ENCODE measurements at regions of chr1 and their contacts with region 1.

Region 1: DNA sequence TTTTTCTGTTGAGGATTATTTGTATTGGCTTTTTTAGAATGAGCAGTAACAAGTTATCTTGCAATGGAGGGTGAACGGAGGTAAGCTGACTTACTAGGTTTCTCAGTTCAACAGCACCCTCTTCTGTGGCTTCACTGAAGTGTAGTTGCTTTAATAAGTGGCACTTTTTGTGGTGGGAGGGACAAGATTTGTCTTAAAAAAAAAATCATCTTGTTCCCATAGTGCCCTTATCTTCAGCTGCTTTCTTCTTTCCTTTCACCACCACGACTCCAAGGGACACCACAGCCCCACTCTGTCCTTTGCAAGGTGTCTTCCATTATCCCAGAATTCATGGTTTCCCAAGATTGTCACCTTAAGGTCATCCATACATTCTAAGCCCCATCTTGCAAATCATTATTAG is 92.9 kb downstream of the PIGK start:
- DNase-seq: no peak
- ATAC-seq: no peak
- H3K4me3 ChIP-seq: no peak overlapping the region
- H3K27ac ChIP-seq: no peak overlapping the region
- H3K4me1 ChIP-seq: no peaks in the 10 kb centered on the region
- H3K27me3 ChIP-seq: no peaks in the 10 kb centered on the region

Region 2: DNA sequence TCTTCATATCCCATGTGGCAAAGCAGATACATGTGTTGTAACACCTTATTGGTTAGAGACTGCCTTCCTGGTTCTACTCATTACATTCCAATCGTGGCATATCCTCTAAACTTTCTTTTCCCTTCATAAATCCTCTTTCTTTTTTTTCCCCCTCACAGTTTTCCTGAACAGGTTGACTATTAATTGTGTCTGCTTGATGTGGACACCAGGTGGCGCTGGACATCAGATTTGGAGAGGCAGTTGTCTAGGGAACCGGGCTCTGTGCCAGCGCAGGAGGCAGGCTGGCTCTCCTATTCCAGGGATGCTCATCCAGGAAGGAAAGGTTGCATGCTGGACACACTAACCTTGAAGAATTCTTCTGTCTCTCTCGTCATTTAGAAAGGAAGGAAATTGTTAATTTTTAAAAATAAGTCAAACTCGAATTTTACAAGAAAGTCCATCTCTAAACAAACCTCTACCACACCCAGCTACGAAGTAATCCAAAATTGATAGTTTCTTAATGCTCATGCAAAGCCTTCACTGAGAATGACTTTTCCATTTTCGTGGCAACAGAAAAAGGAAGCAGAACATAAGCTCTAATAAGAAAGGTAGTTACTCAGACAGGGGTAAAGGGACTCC is 1134.7 kb before region 1 on chr1:
- intact Hi-C with region 1: loop called (anchors 5 to 10 kb)
- DNase-seq: peak; percentile 91 to 94
- ATAC-seq: no peak
- H3K4me3 ChIP-seq: no peak overlapping the region
- H3K27ac ChIP-seq: no peak overlapping the region
- H3K4me1 ChIP-seq: no peaks in the 10 kb centered on the region
- H3K27me3 ChIP-seq: no peaks in the 10 kb centered on the region

Region 3: GRCh38 chr1:76330991-76331603 is 795.2 kb before region 1 on chr1:
- intact Hi-C with region 1: loop called (anchors 2 to 5 kb)
- DNase-seq: no peak
- ATAC-seq: peak; percentile 71
- H3K4me3 ChIP-seq: no peak overlapping the region
- H3K27ac ChIP-seq: no peak overlapping the region
- H3K4me1 ChIP-seq: peaks cover 0 to 3% of the 10 kb centered on the region in 2 donors
- H3K27me3 ChIP-seq: no peaks in the 10 kb centered on the region

Region 4: DNA sequence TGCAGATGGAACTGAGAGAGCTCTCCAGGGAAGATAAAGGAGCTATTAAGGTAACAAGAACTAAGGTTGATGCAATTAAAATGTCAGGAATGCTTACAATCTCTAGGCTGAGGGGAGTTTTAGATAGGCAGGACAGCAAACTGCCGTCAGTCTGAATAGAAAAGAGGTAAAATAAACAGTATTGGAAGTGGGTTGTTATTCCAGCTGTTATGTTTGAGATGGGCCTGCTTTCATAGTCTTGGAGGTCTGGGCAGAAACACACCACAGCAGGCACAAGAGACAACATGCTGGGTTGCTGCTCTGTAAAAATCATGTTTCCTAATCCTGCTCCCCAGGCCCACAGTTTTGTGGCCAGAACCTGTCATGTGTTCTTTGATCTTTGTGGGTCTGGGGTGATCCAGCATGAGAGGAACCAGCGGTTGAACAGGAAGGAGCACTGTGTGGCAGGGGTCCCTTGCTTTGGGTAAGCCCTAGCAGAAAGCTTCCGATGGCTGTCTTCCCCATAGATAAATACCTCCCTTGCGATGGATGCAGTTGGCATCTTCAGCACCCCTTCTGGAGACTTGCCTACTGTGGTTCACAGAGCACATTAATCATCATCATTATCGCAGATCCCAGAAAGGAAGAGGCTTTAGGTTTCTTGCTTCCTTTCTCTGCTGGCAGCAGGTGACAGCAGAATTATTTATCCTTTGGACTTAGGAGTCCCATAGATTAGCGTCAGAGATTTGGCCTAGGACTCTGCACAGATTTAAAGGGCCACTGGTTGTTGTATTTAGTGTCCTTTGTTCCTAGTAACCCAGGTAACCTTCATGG is 252.6 kb after region 1 on chr1:
- intact Hi-C with region 1: no loop called
- DNase-seq: no peak
- ATAC-seq: no peak
- H3K4me3 ChIP-seq: no peak overlapping the region
- H3K27ac ChIP-seq: no peak overlapping the region
- H3K4me1 ChIP-seq: no peaks in the 10 kb centered on the region
- H3K27me3 ChIP-seq: no peaks in the 10 kb centered on the region